ENCODE measurements at regions of chr1 and their contacts with region 1.

Region 1: GRCh38 chr1:78839704-78840277 is 166.7 kb downstream of the ADGRL4 start:
- DNase-seq: peak; percentile 58
- H3K4me3 Mint-ChIP-seq: no peak overlapping the region
- H3K27ac Mint-ChIP-seq: no peak overlapping the region
- H3K4me1 Mint-ChIP-seq: peaks cover 16% of the 10 kb centered on the region
- H3K27me3 Mint-ChIP-seq: no peaks in the 10 kb centered on the region
- CTCF ChIP-seq: peak; percentile 50

Region 2: GRCh38 chr1:78132174-78132947 is 707.4 kb before region 1 on chr1:
- CTCF ChIA-PET with region 1: interaction called, 7 read pairs
- POLR2A ChIA-PET with region 1: no interaction called
- intact Hi-C with region 1: loop called (anchors 10 kb)
- DNase-seq: no peak
- H3K4me3 Mint-ChIP-seq: no peak overlapping the region
- H3K27ac Mint-ChIP-seq: no peak overlapping the region
- H3K4me1 Mint-ChIP-seq: no peaks in the 10 kb centered on the region
- H3K27me3 Mint-ChIP-seq: no peaks in the 10 kb centered on the region
- CTCF ChIP-seq: no peak

Region 3: GRCh38 chr1:78716186-78716585 is 123.6 kb before region 1 on chr1:
- CTCF ChIA-PET with region 1: no interaction called
- POLR2A ChIA-PET with region 1: no interaction called
- intact Hi-C with region 1: no loop called
- DNase-seq: no peak
- H3K4me3 Mint-ChIP-seq: no peak overlapping the region
- H3K27ac Mint-ChIP-seq: no peak overlapping the region
- H3K4me1 Mint-ChIP-seq: peaks cover 27% of the 10 kb centered on the region
- H3K27me3 Mint-ChIP-seq: no peaks in the 10 kb centered on the region
- CTCF ChIP-seq: no peak

Region 4: DNA sequence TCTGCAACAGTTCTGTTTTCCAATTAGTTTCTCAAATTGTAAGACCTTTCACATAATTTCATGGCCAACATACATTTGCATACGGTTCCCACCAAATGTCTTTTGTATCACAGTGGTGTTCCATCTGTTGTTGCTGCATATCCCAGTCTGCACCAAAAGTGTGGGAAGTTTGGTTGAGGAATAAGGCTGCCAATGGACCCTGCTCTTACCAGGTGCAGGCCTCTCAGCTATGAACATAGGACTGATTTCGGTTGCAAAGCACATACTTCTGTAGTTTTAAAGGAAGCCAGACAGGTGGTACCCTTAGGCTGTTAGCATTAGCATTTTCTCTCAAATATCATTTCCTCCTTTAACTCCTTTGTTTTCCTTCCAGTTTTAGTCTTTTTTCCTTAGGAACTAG is 132.9 kb after region 1 on chr1:
- CTCF ChIA-PET with region 1: no interaction called
- POLR2A ChIA-PET with region 1: no interaction called
- intact Hi-C with region 1: no loop called
- DNase-seq: no peak
- H3K4me3 Mint-ChIP-seq: no peak overlapping the region
- H3K27ac Mint-ChIP-seq: no peak overlapping the region
- H3K4me1 Mint-ChIP-seq: no peaks in the 10 kb centered on the region
- H3K27me3 Mint-ChIP-seq: no peaks in the 10 kb centered on the region
- CTCF ChIP-seq: no peak

Region 5: GRCh38 chr1:79193211-79194079 is 353.7 kb after region 1 on chr1:
- CTCF ChIA-PET with region 1: interaction called, 91 read pairs
- POLR2A ChIA-PET with region 1: interaction called, 6 read pairs
- intact Hi-C with region 1: loop called (anchors 1 kb)
- DNase-seq: peak; percentile 73
- H3K4me3 Mint-ChIP-seq: peak overlapping the region; percentile 52
- H3K27ac Mint-ChIP-seq: peak overlapping the region; percentile 92
- H3K4me1 Mint-ChIP-seq: peaks cover 10% of the 10 kb centered on the region
- H3K27me3 Mint-ChIP-seq: no peaks in the 10 kb centered on the region
- CTCF ChIP-seq: no peak

Region 6: GRCh38 chr1:79259388-79260336 is 419.9 kb after region 1 on chr1:
- CTCF ChIA-PET with region 1: interaction called, 4 read pairs
- POLR2A ChIA-PET with region 1: no interaction called
- intact Hi-C with region 1: loop called (anchors 1 kb)
- DNase-seq: peak; percentile 57
- H3K4me3 Mint-ChIP-seq: no peak overlapping the region
- H3K27ac Mint-ChIP-seq: no peak overlapping the region
- H3K4me1 Mint-ChIP-seq: no peaks in the 10 kb centered on the region
- H3K27me3 Mint-ChIP-seq: no peaks in the 10 kb centered on the region
- CTCF ChIP-seq: peak; percentile 62

Region 7: GRCh38 chr1:79353224-79353623 is 513.4 kb after region 1 on chr1:
- CTCF ChIA-PET with region 1: interaction called, 5 read pairs
- POLR2A ChIA-PET with region 1: interaction called, 3 read pairs
- intact Hi-C with region 1: loop called (anchors 1 kb)
- DNase-seq: peak; percentile 66
- H3K4me3 Mint-ChIP-seq: no peak overlapping the region
- H3K27ac Mint-ChIP-seq: no peak overlapping the region
- H3K4me1 Mint-ChIP-seq: peaks cover 8% of the 10 kb centered on the region
- H3K27me3 Mint-ChIP-seq: no peaks in the 10 kb centered on the region
- CTCF ChIP-seq: peak; percentile 51

Region 8: DNA sequence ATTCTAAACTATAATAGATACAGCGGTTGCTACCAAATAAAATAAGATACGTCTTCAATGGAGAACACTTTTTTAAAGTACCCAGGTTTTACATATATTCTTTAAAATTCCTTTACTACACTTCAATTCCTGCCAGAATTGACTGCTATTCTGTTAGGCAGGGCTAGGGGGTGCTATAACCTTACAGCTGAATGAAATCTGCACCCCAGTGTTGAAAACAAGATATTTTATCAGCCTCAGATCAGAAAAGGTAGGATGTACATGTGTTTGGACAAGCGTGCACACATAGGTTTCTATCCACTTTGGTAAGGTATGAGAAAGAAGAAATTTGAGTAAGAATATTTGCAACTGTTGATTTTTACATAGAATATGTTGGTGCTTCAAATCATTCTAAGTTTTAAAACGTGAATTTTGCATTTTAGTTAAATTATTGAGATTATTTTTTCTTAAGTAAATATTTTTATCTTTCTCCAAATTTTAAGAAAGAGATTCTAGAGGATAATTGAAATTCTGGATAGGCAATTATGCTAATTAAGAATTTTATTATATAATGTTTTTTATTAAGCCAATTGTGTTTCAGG is 657.5 kb after region 1 on chr1:
- CTCF ChIA-PET with region 1: interaction called, 4 read pairs
- POLR2A ChIA-PET with region 1: no interaction called
- intact Hi-C with region 1: loop called (anchors 5 kb)
- DNase-seq: peak; percentile 53
- H3K4me3 Mint-ChIP-seq: no peak overlapping the region
- H3K27ac Mint-ChIP-seq: no peak overlapping the region
- H3K4me1 Mint-ChIP-seq: no peaks in the 10 kb centered on the region
- H3K27me3 Mint-ChIP-seq: no peaks in the 10 kb centered on the region
- CTCF ChIP-seq: peak; percentile 89